CD8-positive, alpha-beta T cell (primary cell): ENCODE measurements at regions of chr1 and their contacts with region 1.

Region 1: GRCh38 chr1:116151739-116152576 is 40.8 kb downstream of the MAB21L3 start:
- DNase-seq: peak; percentile 58 to 93 (median 76)
- ATAC-seq: peak; percentile 91
- H3K4me3 ChIP-seq: peak overlapping the region; percentile 35 to 52
- H3K4me3 Mint-ChIP-seq: peak overlapping the region; percentile 79
- H3K27ac ChIP-seq: peak overlapping the region; percentile 17 to 46
- H3K27ac Mint-ChIP-seq: peak overlapping the region; percentile 92
- H3K4me1 ChIP-seq: peaks cover 26% of the 10 kb centered on the region
- H3K4me1 Mint-ChIP-seq: peaks cover 30% of the 10 kb centered on the region
- H3K27me3 ChIP-seq: no peaks in the 10 kb centered on the region
- H3K27me3 Mint-ChIP-seq: no peaks in the 10 kb centered on the region
- CTCF ChIP-seq: peak; percentile 93

Region 2: GRCh38 chr1:116168277-116169097 is 16.5 kb after region 1 on chr1:
- CTCF ChIA-PET with region 1: interaction called, 69 read pairs
- POLR2A ChIA-PET with region 1: interaction called, 3 read pairs
- intact Hi-C with region 1: loop called (anchors 1 kb)
- DNase-seq: peak; percentile 74 to 91 (median 86)
- ATAC-seq: peak; percentile 98
- H3K4me3 ChIP-seq: peak overlapping the region; percentile 61 to 88
- H3K4me3 Mint-ChIP-seq: peak overlapping the region; percentile 77
- H3K27ac ChIP-seq: peak overlapping the region; percentile 48 to 68
- H3K27ac Mint-ChIP-seq: peak overlapping the region; percentile 86
- H3K4me1 ChIP-seq: peaks cover 13% of the 10 kb centered on the region
- H3K4me1 Mint-ChIP-seq: peaks cover 12% of the 10 kb centered on the region
- H3K27me3 ChIP-seq: no peaks in the 10 kb centered on the region
- H3K27me3 Mint-ChIP-seq: no peaks in the 10 kb centered on the region
- CTCF ChIP-seq: peak; percentile 94

Region 3: DNA sequence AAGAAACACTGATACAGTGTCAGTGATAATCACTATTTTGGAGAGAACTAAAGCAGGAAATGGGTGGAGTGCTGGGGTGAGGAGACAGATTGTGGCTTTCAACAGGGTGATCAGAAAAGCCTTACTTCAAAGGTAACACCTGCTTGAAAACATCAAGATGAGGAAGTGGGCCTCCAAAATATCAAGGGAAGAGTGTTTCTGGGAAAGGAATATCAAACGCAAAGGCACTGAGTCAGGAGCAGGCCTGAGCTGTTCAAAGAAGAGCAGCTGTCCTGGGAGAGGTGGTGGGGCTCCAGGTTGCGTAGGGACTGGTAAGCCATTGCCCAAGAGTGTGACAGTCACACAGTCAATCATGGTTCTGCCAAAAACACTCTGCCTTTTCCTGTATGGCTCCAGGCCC is 174.0 kb after region 1 on chr1:
- CTCF ChIA-PET with region 1: no interaction called
- POLR2A ChIA-PET with region 1: no interaction called
- intact Hi-C with region 1: loop called in 1 of 2 experiments (anchors 5 kb)
- DNase-seq: peak in 8 of 9 experiments; percentile 8 to 78 (median 58)
- ATAC-seq: peak; percentile 85
- H3K4me3 ChIP-seq: peak overlapping the region; percentile 3 to 34
- H3K4me3 Mint-ChIP-seq: peak overlapping the region; percentile 70
- H3K27ac ChIP-seq: peak overlapping the region; percentile 55 to 78
- H3K27ac Mint-ChIP-seq: peak overlapping the region; percentile 95
- H3K4me1 ChIP-seq: peaks cover 84% of the 10 kb centered on the region
- H3K4me1 Mint-ChIP-seq: peaks cover 90% of the 10 kb centered on the region
- H3K27me3 ChIP-seq: no peaks in the 10 kb centered on the region
- H3K27me3 Mint-ChIP-seq: no peaks in the 10 kb centered on the region
- CTCF ChIP-seq: no peak

Region 4: DNA sequence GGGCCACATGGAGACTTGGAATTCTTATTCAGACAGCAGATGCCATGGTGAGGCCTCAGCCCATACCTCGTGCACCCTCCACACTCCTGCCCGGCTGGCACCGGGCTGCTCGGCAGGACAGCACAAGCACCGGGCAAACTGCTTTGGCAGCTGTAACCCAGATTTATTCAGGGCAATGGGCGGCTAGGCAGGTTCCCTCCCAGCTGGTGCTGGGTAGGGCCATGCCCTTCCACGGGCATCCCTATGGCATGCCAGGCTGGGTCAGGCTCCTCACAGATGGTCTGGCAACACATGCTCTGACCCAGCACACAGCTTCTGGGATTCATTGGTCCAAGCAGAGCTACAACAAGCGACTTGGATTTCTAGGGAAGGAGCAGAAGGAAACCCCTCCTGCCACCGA is 274.4 kb after region 1 on chr1:
- CTCF ChIA-PET with region 1: interaction called, 3 read pairs
- POLR2A ChIA-PET with region 1: no interaction called
- intact Hi-C with region 1: loop called in 1 of 2 experiments (anchors 5 kb)
- DNase-seq: no peak
- ATAC-seq: no peak
- H3K4me3 ChIP-seq: no peak overlapping the region
- H3K4me3 Mint-ChIP-seq: no peak overlapping the region
- H3K27ac ChIP-seq: no peak overlapping the region
- H3K27ac Mint-ChIP-seq: no peak overlapping the region
- H3K4me1 ChIP-seq: no peaks in the 10 kb centered on the region
- H3K4me1 Mint-ChIP-seq: no peaks in the 10 kb centered on the region
- H3K27me3 ChIP-seq: no peaks in the 10 kb centered on the region
- H3K27me3 Mint-ChIP-seq: no peaks in the 10 kb centered on the region
- CTCF ChIP-seq: no peak

Region 5: DNA sequence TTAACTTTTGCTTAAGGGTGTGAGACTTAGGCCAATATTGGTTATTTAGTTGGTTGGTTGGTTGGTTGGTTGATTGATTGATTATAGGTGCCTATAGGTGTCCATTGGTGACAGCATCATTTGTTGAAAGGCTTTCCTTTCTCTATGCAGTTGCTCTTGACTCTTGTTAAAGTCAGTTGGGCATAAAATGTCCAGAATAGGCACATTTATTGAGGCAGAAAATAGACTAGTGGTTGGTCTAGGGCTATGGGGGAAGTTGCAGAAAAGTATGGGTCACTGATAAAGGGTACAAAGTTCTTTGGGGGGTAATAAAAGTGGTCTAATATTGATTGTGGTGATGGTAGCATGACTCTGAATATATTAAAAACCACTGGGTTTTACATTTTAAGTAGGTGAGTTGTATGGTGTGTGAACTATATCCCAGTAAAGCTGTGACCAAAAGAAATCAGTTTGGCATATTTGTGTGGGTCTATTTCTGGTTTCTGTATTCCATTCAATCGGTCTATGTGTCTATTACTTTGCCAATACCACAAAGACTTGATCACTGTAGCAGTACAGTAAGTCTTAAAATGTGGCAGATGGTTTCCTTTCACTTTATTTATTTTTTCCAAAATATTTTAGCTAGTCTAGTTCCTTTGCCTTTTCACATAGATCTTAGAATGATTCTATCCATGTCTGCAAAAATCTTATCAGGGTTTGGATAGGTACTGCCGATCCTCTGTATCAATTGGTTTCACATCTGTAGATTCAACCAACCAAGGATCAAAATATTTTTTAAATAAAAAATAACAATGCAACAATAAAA is 284.1 kb after region 1 on chr1:
- CTCF ChIA-PET with region 1: interaction called, 3 read pairs
- POLR2A ChIA-PET with region 1: interaction called, 4 read pairs
- intact Hi-C with region 1: loop called in 1 of 2 experiments (anchors 5 kb)
- DNase-seq: no peak
- ATAC-seq: peak; percentile 36
- H3K4me3 ChIP-seq: no peak overlapping the region
- H3K4me3 Mint-ChIP-seq: no peak overlapping the region
- H3K27ac ChIP-seq: no peak overlapping the region
- H3K27ac Mint-ChIP-seq: no peak overlapping the region
- H3K4me1 ChIP-seq: no peaks in the 10 kb centered on the region
- H3K4me1 Mint-ChIP-seq: no peaks in the 10 kb centered on the region
- H3K27me3 ChIP-seq: no peaks in the 10 kb centered on the region
- H3K27me3 Mint-ChIP-seq: no peaks in the 10 kb centered on the region
- CTCF ChIP-seq: no peak

Region 6: DNA sequence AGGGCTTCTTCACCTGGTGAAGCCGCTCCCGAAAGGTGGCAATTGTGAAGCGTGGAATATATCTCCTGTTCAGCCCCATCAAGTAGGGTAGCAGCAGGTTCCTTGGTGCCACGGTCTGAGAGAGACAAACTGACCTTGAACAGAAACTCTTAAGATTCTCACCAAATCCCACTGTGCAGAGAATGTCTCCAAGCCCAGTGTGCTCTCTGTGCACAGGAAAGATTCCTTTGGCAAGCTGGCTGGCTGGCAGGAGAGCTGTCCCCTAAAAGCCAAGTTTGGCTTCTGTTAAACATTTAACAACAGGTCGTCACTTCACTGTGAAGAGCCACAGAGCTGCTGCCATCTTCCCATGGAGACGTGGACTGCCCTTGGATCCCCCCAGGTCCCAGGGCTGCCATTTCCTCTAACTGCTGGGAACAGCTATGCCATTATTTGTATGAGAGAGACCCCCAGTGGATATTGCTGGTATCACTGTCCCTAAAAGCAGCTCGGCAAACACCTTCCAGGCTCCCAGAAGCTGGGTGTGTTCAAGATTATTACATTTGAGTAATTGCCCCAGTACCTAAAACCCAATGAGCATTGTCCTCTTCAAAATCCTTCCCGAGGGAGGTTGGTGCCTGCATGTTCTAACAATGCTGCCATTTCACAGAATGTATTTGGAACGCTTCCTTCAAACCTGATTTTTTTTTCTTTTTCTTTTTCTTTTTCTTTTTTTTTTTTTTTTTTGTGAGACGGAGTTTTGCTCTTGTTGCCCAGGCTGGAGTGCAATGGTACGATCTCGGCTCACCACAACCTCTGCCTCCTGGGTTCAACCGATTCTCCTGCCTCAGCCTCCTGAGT is 347.1 kb after region 1 on chr1:
- CTCF ChIA-PET with region 1: interaction called, 618 read pairs
- POLR2A ChIA-PET with region 1: interaction called, 3 read pairs
- intact Hi-C with region 1: no loop called
- DNase-seq: peak in 8 of 9 experiments; percentile 20 to 78 (median 52)
- ATAC-seq: peak; percentile 70
- H3K4me3 ChIP-seq: no peak overlapping the region
- H3K4me3 Mint-ChIP-seq: no peak overlapping the region
- H3K27ac ChIP-seq: no peak overlapping the region
- H3K27ac Mint-ChIP-seq: peak overlapping the region; percentile 57
- H3K4me1 ChIP-seq: peaks cover 11% of the 10 kb centered on the region
- H3K4me1 Mint-ChIP-seq: peaks cover 23% of the 10 kb centered on the region
- H3K27me3 ChIP-seq: no peaks in the 10 kb centered on the region
- H3K27me3 Mint-ChIP-seq: no peaks in the 10 kb centered on the region
- CTCF ChIP-seq: peak; percentile 77

Region 7: DNA sequence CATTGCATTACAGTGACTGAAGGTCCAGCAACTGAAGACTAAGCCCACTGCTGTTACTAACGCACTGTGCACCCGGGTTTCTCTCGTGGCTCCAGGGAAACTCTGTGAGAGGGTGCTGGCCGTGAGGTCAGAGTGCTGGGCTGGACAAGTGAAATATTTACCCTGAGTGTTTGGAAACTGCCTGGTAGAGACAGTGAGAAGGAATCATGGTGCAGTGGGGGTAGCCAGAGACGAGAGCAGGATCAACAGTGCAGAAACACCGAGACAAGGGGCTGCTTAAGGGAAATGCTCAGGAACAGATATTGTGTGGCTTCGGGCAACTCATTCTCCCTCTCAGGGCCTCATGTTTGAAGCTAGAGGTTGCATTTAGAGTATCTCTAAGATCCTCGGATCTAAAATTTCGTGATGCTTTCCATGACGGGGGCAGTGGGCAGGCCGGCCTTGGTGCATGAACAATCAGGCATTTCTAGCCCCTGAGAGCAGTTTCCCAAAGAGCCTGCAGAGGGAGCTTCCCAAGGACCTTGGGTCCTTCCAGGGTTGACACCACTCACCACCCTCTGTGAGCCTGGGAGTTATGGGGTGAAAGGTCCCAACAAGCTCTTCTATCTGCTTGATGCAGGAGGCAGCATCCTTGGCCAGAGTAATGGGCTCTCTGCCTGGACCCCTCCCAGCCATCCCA is 612.0 kb after region 1 on chr1:
- CTCF ChIA-PET with region 1: no interaction called
- POLR2A ChIA-PET with region 1: no interaction called
- intact Hi-C with region 1: loop called in 1 of 2 experiments (anchors 10 kb)
- DNase-seq: peak in 4 of 9 experiments; percentile 45 to 74 (median 58)
- ATAC-seq: peak; percentile 10
- H3K4me3 ChIP-seq: peak overlapping the region; percentile 18 to 22
- H3K4me3 Mint-ChIP-seq: peak overlapping the region; percentile 75
- H3K27ac ChIP-seq: peak overlapping the region; percentile 57 to 87
- H3K27ac Mint-ChIP-seq: peak overlapping the region; percentile 96
- H3K4me1 ChIP-seq: peaks cover 96% of the 10 kb centered on the region
- H3K4me1 Mint-ChIP-seq: peaks cover 96% of the 10 kb centered on the region
- H3K27me3 ChIP-seq: no peaks in the 10 kb centered on the region
- H3K27me3 Mint-ChIP-seq: no peaks in the 10 kb centered on the region
- CTCF ChIP-seq: peak; percentile 22